Activated B cell treated with CpG ODN at 0.5 μM for 24 hours (primary cell): ENCODE measurements at regions of chr11 and their contacts with region 1.

Region 1: GRCh38 chr11:64269380-64270234 is 14.9 kb downstream of the BAD start:
- DNase-seq: peak; percentile 97
- ATAC-seq: peak; percentile 72
- H3K4me3 Mint-ChIP-seq: peak overlapping the region; percentile 97
- H3K27ac Mint-ChIP-seq: peak overlapping the region; percentile 95
- H3K4me1 Mint-ChIP-seq: peaks cover 23% of the 10 kb centered on the region
- H3K27me3 Mint-ChIP-seq: no peaks in the 10 kb centered on the region
- CTCF ChIP-seq: no peak

Region 2: GRCh38 chr11:64152841-64153691 is 116.5 kb before region 1 on chr11:
- CTCF ChIA-PET with region 1: no interaction called
- POLR2A ChIA-PET with region 1: no interaction called
- intact Hi-C with region 1: loop called (anchors 1 kb)
- DNase-seq: peak; percentile 77
- ATAC-seq: peak; percentile 96
- H3K4me3 Mint-ChIP-seq: no peak overlapping the region
- H3K27ac Mint-ChIP-seq: no peak overlapping the region
- H3K4me1 Mint-ChIP-seq: peaks cover 3% of the 10 kb centered on the region
- H3K27me3 Mint-ChIP-seq: peaks cover 7% of the 10 kb centered on the region
- CTCF ChIP-seq: peak; percentile 97

Region 3: DNA sequence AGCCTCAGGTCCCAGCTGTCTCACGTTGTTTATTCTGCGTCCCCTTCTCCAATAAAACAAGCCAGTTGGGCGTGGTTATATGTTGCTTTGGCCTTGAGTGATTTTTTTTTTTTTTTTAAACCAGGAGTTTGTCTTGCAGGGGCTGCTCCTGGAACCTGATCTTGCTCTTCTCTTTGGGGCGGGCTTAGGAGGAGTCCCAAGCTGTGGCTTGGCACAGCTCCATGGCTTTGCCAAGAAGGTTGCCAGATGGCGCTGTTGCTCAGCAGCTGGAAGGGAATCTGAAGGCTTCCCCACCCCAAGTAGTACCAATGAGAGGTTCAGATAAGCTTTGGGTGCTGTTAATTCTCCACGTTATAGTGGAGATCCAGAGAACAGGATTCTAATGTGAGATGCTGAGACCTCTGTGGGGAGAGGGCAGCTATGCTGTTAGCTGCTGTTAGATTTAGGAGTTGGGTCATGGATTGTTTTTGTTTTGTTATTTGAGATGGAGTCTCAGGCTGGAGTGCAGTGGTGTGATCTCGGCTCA is 65.1 kb before region 1 on chr11:
- CTCF ChIA-PET with region 1: interaction called, 10 read pairs
- POLR2A ChIA-PET with region 1: interaction called, 81 read pairs
- intact Hi-C with region 1: loop called (anchors 1 kb)
- DNase-seq: peak; percentile 49
- ATAC-seq: peak; percentile 22
- H3K4me3 Mint-ChIP-seq: peak overlapping the region; percentile 73
- H3K27ac Mint-ChIP-seq: peak overlapping the region; percentile 83
- H3K4me1 Mint-ChIP-seq: peaks cover 44% of the 10 kb centered on the region
- H3K27me3 Mint-ChIP-seq: no peaks in the 10 kb centered on the region
- CTCF ChIP-seq: no peak

Region 4: GRCh38 chr11:64233913-64234834 is 35.4 kb before region 1 on chr11 and contains the start of gene VEGFB:
- CTCF ChIA-PET with region 1: no interaction called
- POLR2A ChIA-PET with region 1: interaction called, 8 read pairs
- intact Hi-C with region 1: loop called (anchors 1 kb)
- DNase-seq: peak; percentile 65
- ATAC-seq: peak; percentile 49
- H3K4me3 Mint-ChIP-seq: peak within 1 kb of the TSS; percentile 90
- H3K27ac Mint-ChIP-seq: peak within 1 kb of the TSS; percentile 93
- H3K4me1 Mint-ChIP-seq: peaks cover 75% of the 10 kb centered on the region
- H3K27me3 Mint-ChIP-seq: no peaks in the 10 kb centered on the region
- CTCF ChIP-seq: no peak
- total RNA-seq, gene VEGFB: 86.7 and 97.4 TPM in 2 replicates

Region 5: GRCh38 chr11:64246871-64247728 is 22.5 kb before region 1 on chr11 and contains the start of gene PPP1R14B:
- CTCF ChIA-PET with region 1: interaction called, 13 read pairs
- POLR2A ChIA-PET with region 1: interaction called, 81 read pairs
- intact Hi-C with region 1: loop called (anchors 1 kb)
- DNase-seq: peak; percentile 78
- ATAC-seq: peak; percentile 63
- H3K4me3 Mint-ChIP-seq: peak within 1 kb of the TSS; percentile 90
- H3K27ac Mint-ChIP-seq: peak within 1 kb of the TSS; percentile 87
- H3K4me1 Mint-ChIP-seq: peaks cover 43% of the 10 kb centered on the region
- H3K27me3 Mint-ChIP-seq: no peaks in the 10 kb centered on the region
- CTCF ChIP-seq: no peak
- total RNA-seq, gene PPP1R14B: 112 and 127 TPM in 2 replicates

Region 6: DNA sequence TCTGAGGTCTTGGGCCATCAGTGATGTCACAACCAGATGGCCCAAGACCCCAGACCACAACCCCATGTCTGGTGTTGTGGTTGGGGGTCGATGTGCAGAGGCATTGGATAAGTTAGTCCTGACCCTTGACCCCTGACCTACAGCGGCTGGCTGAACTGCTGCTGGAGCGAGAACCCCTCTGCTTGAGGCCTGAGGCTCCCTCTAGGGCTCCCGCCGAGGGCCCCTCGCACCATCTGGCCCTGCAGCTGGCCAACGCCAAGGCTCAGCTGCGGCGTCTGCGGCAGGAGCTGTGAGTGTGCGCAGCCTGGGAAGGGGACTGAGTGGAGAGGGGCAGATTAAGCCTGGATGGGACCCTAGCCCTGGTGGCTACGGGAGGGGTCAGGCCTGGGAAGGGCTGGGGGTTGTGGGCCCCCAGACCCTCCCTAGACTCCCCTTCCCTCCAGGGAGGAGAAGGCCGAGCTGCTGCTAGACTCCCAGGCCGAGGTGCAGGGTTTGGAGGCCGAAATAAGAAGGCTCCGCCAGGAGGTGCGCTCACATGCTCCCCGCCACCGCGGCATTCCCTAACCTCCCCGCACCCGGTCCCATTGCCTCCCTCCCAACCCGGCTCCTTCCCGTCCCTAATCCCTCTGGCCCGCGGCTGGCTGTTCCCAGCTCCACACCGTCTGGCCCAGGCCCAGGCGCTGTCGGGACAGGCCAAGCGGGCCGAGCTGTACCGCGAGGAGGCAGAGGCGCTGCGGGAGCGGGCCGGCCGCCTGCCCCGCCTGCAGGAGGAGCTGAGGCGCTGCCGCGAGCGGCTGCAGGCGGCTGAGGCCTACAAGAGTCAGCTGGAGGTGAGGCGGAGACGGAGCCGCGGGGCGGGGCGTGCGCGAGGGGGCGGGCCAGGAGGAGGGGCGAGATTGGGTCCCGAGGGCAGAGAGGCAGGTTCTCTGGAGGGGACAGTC is 72.5 kb after region 1 on chr11:
- CTCF ChIA-PET with region 1: no interaction called
- POLR2A ChIA-PET with region 1: interaction called, 5 read pairs
- intact Hi-C with region 1: loop called (anchors 1 kb)
- DNase-seq: peak; percentile 87
- ATAC-seq: peak; percentile 51
- H3K4me3 Mint-ChIP-seq: peak overlapping the region; percentile 19
- H3K27ac Mint-ChIP-seq: no peak overlapping the region
- H3K4me1 Mint-ChIP-seq: peaks cover 54% of the 10 kb centered on the region
- H3K27me3 Mint-ChIP-seq: no peaks in the 10 kb centered on the region
- CTCF ChIP-seq: no peak